ENCODE measurements at regions of chr18 and their contacts with region 1.

Region 1: GRCh38 chr18:36015629-36016028 is 43.1 kb downstream of the RMP24 start:
- DNase-seq: no peak
- ATAC-seq: no peak
- H3K4me3 ChIP-seq: no peak overlapping the region
- H3K4me3 Mint-ChIP-seq: no peak overlapping the region
- H3K27ac ChIP-seq: no peak overlapping the region
- H3K27ac Mint-ChIP-seq: no peak overlapping the region
- H3K4me1 ChIP-seq: no peaks in the 10 kb centered on the region
- H3K4me1 Mint-ChIP-seq: peaks cover 7% of the 10 kb centered on the region
- H3K27me3 ChIP-seq: no peaks in the 10 kb centered on the region
- H3K27me3 Mint-ChIP-seq: no peaks in the 10 kb centered on the region
- CTCF ChIP-seq: no peak

Region 2: DNA sequence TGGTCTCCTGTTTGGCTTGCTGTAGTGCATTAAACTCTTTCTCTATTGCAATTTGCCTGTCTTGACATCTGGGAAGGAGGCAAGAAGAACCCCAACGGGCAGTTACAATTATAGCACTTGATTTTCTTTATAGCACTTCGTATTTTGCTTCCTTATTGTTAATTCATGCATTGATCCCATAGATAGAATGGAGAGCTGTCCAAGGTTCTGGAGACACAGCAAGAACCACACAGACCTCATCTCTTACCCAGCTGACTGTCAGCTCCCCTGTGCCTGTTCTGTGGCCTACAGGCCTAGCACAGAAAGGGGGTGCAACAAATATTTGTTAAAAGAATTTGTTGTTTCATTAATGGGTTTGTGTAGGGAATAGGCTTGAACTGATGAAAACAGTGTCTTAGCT is 239.7 kb before region 1 on chr18:
- CTCF ChIA-PET with region 1: no interaction called
- POLR2A ChIA-PET with region 1: no interaction called
- intact Hi-C with region 1: no loop called
- DNase-seq: no peak
- ATAC-seq: no peak
- H3K4me3 ChIP-seq: no peak overlapping the region
- H3K4me3 Mint-ChIP-seq: no peak overlapping the region
- H3K27ac ChIP-seq: no peak overlapping the region
- H3K27ac Mint-ChIP-seq: no peak overlapping the region
- H3K4me1 ChIP-seq: no peaks in the 10 kb centered on the region
- H3K4me1 Mint-ChIP-seq: no peaks in the 10 kb centered on the region
- H3K27me3 ChIP-seq: peaks cover 0 to 3% of the 10 kb centered on the region in 2 experiments
- H3K27me3 Mint-ChIP-seq: peaks cover 15% of the 10 kb centered on the region
- CTCF ChIP-seq: no peak

Region 3: DNA sequence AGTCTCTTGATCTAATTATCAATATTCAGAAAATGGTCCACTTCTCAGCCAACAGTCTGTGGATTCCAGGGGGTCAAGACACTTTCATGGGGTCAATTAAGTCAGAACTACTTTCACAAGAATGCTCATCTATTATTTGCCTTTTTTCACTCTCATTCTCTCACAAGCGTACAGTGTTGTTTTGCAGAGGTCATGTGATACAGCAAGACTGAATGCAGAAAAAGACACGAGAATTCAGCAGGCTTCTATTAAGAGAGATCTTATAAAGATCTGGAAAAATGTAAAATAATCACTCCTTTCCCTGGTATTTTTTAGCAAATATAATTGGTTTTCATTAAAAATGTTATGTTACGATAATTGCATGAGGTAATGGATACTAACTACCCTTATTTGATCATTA is 43.0 kb after region 1 on chr18:
- CTCF ChIA-PET with region 1: no interaction called
- POLR2A ChIA-PET with region 1: no interaction called
- intact Hi-C with region 1: no loop called
- DNase-seq: no peak
- ATAC-seq: no peak
- H3K4me3 ChIP-seq: no peak overlapping the region
- H3K4me3 Mint-ChIP-seq: no peak overlapping the region
- H3K27ac ChIP-seq: no peak overlapping the region
- H3K27ac Mint-ChIP-seq: no peak overlapping the region
- H3K4me1 ChIP-seq: peaks cover 5% of the 10 kb centered on the region
- H3K4me1 Mint-ChIP-seq: peaks cover 68% of the 10 kb centered on the region
- H3K27me3 ChIP-seq: no peaks in the 10 kb centered on the region
- H3K27me3 Mint-ChIP-seq: no peaks in the 10 kb centered on the region
- CTCF ChIP-seq: no peak

Region 4: DNA sequence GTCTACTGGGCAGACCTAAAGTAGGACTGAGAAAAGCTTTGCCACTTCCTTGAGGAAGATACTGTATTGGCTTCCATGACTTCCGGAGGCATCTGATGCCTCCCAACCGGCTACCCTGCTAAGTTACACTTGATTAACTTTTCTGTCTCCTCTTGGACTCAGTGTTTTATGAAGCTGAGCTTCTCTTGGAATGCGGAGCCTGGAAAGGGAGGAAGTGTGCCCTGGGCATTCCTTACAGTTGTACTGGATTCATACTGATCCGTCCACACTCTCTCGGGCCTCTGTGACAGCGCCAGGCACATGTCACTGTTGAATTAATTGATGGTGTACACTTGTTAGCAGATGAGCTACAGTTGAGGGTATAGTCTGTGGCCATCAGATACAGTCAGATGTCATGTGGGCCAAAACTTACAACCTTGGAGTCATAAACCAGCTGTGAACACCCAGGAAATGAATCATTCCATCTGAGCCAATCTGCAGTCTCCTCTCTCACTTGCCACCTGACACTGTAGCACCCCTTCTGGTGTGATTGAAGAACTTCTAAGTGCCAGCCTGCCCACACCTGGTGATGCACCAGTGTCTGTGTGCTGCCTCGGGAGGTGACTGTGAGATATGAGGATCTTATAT is 404.4 kb after region 1 on chr18:
- CTCF ChIA-PET with region 1: no interaction called
- POLR2A ChIA-PET with region 1: no interaction called
- intact Hi-C with region 1: loop called in 1 of 2 experiments (anchors 10 kb)
- DNase-seq: peak in 1 of 14 experiments; percentile 3
- ATAC-seq: no peak
- H3K4me3 ChIP-seq: no peak overlapping the region
- H3K4me3 Mint-ChIP-seq: no peak overlapping the region
- H3K27ac ChIP-seq: no peak overlapping the region
- H3K27ac Mint-ChIP-seq: no peak overlapping the region
- H3K4me1 ChIP-seq: no peaks in the 10 kb centered on the region
- H3K4me1 Mint-ChIP-seq: no peaks in the 10 kb centered on the region
- H3K27me3 ChIP-seq: peaks cover 0 to 4% of the 10 kb centered on the region in 2 experiments
- H3K27me3 Mint-ChIP-seq: peaks cover 38% of the 10 kb centered on the region
- CTCF ChIP-seq: no peak

Region 5: DNA sequence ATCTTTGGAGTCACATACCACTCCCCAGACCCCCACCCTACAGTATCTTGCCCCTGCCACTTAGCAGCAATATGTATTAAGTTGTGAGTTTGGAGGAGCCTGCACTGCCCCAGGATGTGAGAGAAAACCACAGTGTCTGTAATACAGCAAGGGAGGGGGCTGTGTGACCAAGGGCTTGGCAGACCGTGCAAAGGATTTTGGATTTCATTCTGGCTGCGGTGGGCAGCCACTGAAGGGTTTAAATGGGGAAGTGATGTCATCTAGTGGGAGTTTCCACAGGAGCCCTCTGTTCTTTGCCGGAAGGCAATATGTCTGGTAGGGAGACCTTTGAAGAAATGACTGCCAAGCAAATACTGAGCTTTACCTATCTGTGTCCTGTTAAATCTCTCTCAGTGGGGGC is 484.3 kb after region 1 on chr18:
- CTCF ChIA-PET with region 1: no interaction called
- POLR2A ChIA-PET with region 1: no interaction called
- intact Hi-C with region 1: no loop called
- DNase-seq: no peak
- ATAC-seq: no peak
- H3K4me3 ChIP-seq: no peak overlapping the region
- H3K4me3 Mint-ChIP-seq: no peak overlapping the region
- H3K27ac ChIP-seq: no peak overlapping the region
- H3K27ac Mint-ChIP-seq: no peak overlapping the region
- H3K4me1 ChIP-seq: no peaks in the 10 kb centered on the region
- H3K4me1 Mint-ChIP-seq: no peaks in the 10 kb centered on the region
- H3K27me3 ChIP-seq: peaks cover 0 to 2% of the 10 kb centered on the region in 2 experiments
- H3K27me3 Mint-ChIP-seq: no peaks in the 10 kb centered on the region
- CTCF ChIP-seq: no peak

Region 6: DNA sequence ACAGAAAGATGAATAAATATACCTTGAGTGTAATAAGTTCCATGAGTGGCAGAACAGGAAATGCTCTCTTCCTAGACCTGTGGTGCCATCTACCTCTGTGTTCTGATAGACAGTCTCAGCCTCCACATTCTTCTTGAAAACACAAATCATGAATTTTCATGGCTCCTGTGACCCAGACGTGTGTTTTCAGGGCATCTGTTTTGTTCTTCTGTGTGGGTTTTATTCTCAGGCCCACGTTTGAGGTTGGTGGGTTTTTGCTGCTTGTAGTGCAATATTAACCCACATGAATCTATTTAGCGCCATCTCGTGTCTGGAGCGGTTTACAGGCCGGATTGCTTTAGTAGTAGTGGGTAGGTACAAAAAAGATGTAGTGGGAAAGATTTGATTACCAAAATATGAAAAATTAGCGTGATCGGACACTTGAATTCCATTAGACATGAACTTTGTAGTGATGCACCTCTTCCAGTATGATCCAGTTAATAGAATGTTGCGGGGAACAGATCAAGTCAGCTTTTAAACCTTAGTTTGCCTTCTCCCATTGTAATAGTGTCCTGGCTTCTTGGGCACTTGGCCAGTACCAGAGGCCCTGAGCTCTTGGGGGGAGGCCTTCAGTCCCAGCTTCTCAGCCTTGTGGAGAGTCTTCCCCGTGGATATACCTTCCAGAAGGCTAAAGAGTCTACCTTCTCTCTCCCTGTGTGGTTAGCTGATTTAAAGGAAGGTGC is 556.7 kb after region 1 on chr18:
- CTCF ChIA-PET with region 1: no interaction called
- POLR2A ChIA-PET with region 1: no interaction called
- intact Hi-C with region 1: loop called in 1 of 2 experiments (anchors 5 kb)
- DNase-seq: peak in 3 of 14 experiments; percentile 16 to 29 (median 27)
- ATAC-seq: no peak
- H3K4me3 ChIP-seq: no peak overlapping the region
- H3K4me3 Mint-ChIP-seq: peak overlapping the region; percentile 22
- H3K27ac ChIP-seq: no peak overlapping the region
- H3K27ac Mint-ChIP-seq: no peak overlapping the region
- H3K4me1 ChIP-seq: no peaks in the 10 kb centered on the region
- H3K4me1 Mint-ChIP-seq: peaks cover 3% of the 10 kb centered on the region
- H3K27me3 ChIP-seq: no peaks in the 10 kb centered on the region
- H3K27me3 Mint-ChIP-seq: peaks cover 3% of the 10 kb centered on the region
- CTCF ChIP-seq: peak; percentile 29

Region 7: GRCh38 chr18:36809590-36810381 is 794.2 kb after region 1 on chr18:
- CTCF ChIA-PET with region 1: interaction called, 3 read pairs
- POLR2A ChIA-PET with region 1: no interaction called
- intact Hi-C with region 1: loop called (anchors 5 kb)
- DNase-seq: peak in 12 of 14 experiments; percentile 5 to 79 (median 15)
- ATAC-seq: peak; percentile 98
- H3K4me3 ChIP-seq: no peak overlapping the region
- H3K4me3 Mint-ChIP-seq: no peak overlapping the region
- H3K27ac ChIP-seq: no peak overlapping the region
- H3K27ac Mint-ChIP-seq: no peak overlapping the region
- H3K4me1 ChIP-seq: peaks cover 2% of the 10 kb centered on the region
- H3K4me1 Mint-ChIP-seq: peaks cover 14% of the 10 kb centered on the region
- H3K27me3 ChIP-seq: no peaks in the 10 kb centered on the region
- H3K27me3 Mint-ChIP-seq: no peaks in the 10 kb centered on the region
- CTCF ChIP-seq: peak; percentile 87